ENCODE measurements at regions of chr7 and their contacts with region 1.

Region 1: DNA sequence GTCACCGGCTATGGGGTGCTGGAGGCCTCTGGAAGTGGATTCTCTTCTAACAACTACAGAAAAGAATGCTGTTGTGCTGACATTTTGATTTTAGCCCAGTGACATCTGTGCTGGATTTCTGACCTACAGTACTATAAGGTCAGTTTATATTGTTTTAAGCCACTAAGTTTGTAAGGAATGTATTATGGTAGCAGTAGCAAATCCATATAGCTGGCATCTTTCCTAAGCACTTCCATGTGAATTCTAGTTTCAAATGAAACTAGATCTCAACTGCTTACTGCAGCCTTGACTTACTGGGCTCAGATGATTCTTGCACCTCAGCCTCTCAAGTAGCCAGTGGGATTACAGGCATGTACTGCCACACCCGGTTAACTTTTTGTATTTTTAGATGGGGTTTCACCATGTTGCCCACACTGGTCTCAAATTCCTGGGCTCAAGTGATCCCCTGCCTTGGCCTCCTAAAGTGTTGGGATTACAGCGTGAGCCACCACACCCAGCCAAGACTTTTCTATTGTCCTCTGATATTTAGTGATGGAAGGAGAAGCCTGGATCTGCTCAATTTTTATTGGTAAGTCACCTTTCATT is 414.0 kb downstream of the PHTF2 start:
- DNase-seq: no peak
- ATAC-seq: no peak
- H3K4me3 ChIP-seq: no peak overlapping the region
- H3K27ac ChIP-seq: no peak overlapping the region
- H3K4me1 ChIP-seq: no peaks in the 10 kb centered on the region
- H3K27me3 ChIP-seq: no peaks in the 10 kb centered on the region
- CTCF ChIP-seq: no peak

Region 2: GRCh38 chr7:78134256-78134655 is 78.3 kb before region 1 on chr7:
- intact Hi-C with region 1: loop called in 1 of 2 experiments (anchors 5 kb)
- DNase-seq: no peak
- ATAC-seq: no peak
- H3K4me3 ChIP-seq: no peak overlapping the region
- H3K27ac ChIP-seq: no peak overlapping the region
- H3K4me1 ChIP-seq: peaks cover 4% of the 10 kb centered on the region
- H3K27me3 ChIP-seq: no peaks in the 10 kb centered on the region
- CTCF ChIP-seq: peak; percentile 33

Measured in psoas muscle (tissue), 8 donors.